Aorta (tissue), 5 donors: ENCODE measurements at regions of chr13 and their contacts with region 1.

Region 1: GRCh38 chr13:39538816-39539790 is 63.9 kb downstream of the LHFPL6 start:
- DNase-seq: no peak
- ATAC-seq: no peak
- H3K4me3 ChIP-seq: no peak overlapping the region
- H3K27ac ChIP-seq: no peak overlapping the region
- H3K4me1 ChIP-seq: peaks cover 0 to under 1% of the 10 kb centered on the region in 2 donors
- H3K27me3 ChIP-seq: no peaks in the 10 kb centered on the region

Region 2: DNA sequence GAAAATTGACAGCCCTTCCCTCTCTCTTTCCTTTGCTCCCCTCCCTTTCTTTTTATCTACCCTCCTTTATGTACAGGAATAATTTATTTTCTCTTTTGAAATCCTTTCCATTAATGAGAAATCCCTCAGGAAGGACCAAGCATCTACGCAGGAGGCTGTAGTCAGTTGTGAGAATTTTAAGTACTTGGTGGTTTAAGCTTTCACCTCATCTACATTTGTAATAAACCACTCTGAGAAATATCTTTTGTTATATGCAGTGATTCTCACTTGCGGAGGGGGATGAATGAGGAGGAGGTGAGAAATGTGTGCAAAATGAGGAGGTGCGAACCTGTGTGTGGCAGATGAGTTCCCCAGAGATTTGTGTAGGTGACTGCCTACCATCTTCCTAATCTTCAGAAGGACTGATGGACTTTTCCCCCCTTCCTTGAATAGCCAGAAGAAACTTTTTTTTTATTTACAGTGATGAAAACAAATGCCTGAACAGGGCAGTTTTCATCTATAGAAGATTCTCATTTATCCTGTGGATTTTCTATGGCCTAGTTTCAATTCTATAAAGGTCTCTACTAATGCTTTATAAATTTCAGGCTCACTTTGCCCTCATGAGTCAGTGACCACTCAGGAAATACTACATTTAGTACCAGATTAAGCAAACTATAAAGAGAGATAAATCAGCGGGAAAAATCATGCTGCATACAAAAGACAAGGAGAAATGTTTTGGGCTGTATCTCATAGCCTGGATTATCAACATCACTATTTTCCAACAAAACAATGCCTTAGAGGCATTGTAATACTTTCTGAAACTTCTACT is 54.4 kb before region 1 on chr13:
- intact Hi-C with region 1: no loop called
- DNase-seq: no peak
- ATAC-seq: no peak
- H3K4me3 ChIP-seq: no peak overlapping the region
- H3K27ac ChIP-seq: no peak overlapping the region
- H3K4me1 ChIP-seq: no peaks in the 10 kb centered on the region
- H3K27me3 ChIP-seq: no peaks in the 10 kb centered on the region

Region 3: DNA sequence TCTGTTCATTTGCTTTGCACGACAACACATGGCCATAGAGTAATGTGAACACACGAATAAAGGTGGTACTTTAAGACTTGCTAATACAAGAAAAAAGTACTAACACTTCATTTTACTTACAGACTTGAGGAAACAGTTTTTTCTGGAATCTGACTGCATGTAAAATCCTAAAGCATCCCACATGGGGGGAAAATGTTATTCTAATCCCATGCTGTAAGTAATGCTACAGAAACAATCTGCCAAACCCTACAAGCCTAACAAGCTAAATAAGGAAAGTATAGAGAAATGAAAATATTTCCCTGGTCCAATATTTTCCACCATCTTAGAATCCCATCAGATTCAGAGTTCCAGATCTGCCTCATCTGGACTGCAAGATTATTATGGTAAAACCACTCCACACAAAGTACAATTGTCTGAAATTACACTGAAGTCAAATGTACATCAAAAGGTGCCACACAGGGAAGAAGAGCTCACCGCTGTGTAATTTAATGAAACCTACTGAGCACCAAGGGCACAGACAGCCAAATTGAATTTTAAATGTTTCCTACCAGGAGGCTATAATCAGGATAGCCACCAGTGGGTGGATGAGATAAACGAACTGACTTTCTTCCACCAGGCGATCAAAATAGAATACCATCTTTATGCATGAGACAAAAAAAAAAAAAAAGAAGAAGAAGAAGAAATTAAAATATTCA is 41.9 kb after region 1 on chr13:
- intact Hi-C with region 1: loop called (anchors 5 to 10 kb)
- DNase-seq: no peak
- ATAC-seq: no peak
- H3K4me3 ChIP-seq: no peak overlapping the region
- H3K27ac ChIP-seq: no peak overlapping the region
- H3K4me1 ChIP-seq: peaks cover 3 to 15% of the 10 kb centered on the region in 2 donors
- H3K27me3 ChIP-seq: no peaks in the 10 kb centered on the region

Region 4: GRCh38 chr13:39586151-39586550 is 47.0 kb after region 1 on chr13:
- intact Hi-C with region 1: loop called (anchors 5 to 10 kb)
- DNase-seq: no peak
- ATAC-seq: no peak
- H3K4me3 ChIP-seq: no peak overlapping the region
- H3K27ac ChIP-seq: no peak overlapping the region
- H3K4me1 ChIP-seq: peaks cover 3 to 11% of the 10 kb centered on the region in 2 donors
- H3K27me3 ChIP-seq: no peaks in the 10 kb centered on the region